PC-3 (cell line): ENCODE measurements at regions of chr18 and their contacts with region 1.

Region 1: DNA sequence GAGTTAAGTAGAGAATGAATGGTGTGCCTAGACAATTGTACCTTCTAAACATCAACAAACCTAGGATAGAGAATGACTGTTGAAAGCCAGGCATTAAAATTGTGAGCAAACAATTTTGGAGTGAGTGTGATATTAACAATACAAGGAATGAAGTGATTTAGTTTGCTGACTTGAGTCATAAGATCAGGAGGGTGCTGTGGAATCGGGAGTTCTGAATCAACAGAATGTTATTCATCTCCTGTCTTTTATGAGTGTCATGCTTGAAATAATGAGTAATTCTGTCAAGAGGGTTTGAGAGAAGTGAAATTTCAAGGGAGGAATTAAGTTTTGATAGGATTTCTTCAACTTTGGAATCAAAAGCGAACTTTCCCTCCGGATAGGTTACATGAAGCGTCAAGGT is 214.4 kb upstream of the DSEL start:
- DNase-seq: peak; percentile 94
- ATAC-seq: peak; percentile 90
- H3K4me3 ChIP-seq: peak overlapping the region; percentile 27; the same call in 1 of the 2 replicates
- H3K27ac ChIP-seq: peak overlapping the region; percentile 94
- H3K4me1 ChIP-seq: peaks cover 47% of the 10 kb centered on the region
- H3K27me3 ChIP-seq: no peaks in the 10 kb centered on the region
- CTCF ChIP-seq: no peak

Region 2: GRCh38 chr18:67072791-67073190 is 658.1 kb before region 1 on chr18:
- CTCF ChIA-PET with region 1: no interaction called
- POLR2A ChIA-PET with region 1: no interaction called
- intact Hi-C with region 1: no loop called
- DNase-seq: peak; percentile 9
- ATAC-seq: no peak
- H3K4me3 ChIP-seq: no peak overlapping the region
- H3K27ac ChIP-seq: no peak overlapping the region
- H3K4me1 ChIP-seq: no peaks in the 10 kb centered on the region
- H3K27me3 ChIP-seq: no peaks in the 10 kb centered on the region
- CTCF ChIP-seq: no peak

Region 3: DNA sequence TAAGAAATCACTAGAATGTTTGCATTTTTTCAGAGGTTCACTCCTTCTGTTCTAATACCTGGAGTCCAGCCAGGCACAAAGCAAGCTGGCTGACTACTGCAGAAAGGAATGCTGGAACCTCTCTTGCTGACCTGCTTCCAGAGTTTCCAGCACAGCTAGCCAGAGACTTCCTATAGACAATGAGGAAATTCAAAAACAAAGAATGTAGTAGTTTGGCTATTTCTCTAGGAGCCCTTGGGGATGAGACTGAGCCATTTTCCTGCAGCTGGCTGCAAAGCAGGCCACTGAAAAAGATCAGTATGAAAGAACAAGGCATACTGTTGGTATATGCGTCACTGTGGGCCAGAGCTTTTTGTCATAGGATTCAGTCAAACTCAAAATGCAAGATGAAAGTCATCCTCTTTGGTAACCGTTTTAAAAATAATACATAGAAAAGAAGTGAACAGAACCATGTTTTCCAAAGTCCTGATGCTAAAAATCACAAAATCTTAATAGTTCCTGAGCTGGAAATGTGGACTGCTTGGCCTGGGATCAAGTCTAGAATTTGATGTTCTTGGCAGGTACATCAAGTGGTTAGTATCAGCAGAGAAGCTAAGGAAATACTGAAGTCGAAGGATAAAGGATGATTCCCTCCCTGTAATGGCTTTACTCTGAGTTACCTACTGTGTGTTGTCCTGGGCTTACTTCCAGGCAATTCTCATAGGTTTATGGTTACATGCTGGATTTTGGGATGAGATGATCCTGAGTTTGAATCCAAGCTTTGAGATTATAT is 205.4 kb before region 1 on chr18:
- CTCF ChIA-PET with region 1: no interaction called
- POLR2A ChIA-PET with region 1: no interaction called
- intact Hi-C with region 1: loop called (anchors 2 kb)
- DNase-seq: peak; percentile 93
- ATAC-seq: peak; percentile 99
- H3K4me3 ChIP-seq: no peak overlapping the region
- H3K27ac ChIP-seq: peak overlapping the region; percentile 34; the same call in 1 of the 2 replicates
- H3K4me1 ChIP-seq: peaks cover 16% of the 10 kb centered on the region
- H3K27me3 ChIP-seq: no peaks in the 10 kb centered on the region
- CTCF ChIP-seq: no peak

Region 4: GRCh38 chr18:67670024-67670543 is 60.8 kb before region 1 on chr18:
- CTCF ChIA-PET with region 1: no interaction called
- POLR2A ChIA-PET with region 1: no interaction called
- intact Hi-C with region 1: no loop called
- DNase-seq: peak; percentile 32
- ATAC-seq: no peak
- H3K4me3 ChIP-seq: no peak overlapping the region
- H3K27ac ChIP-seq: no peak overlapping the region
- H3K4me1 ChIP-seq: peaks cover 10% of the 10 kb centered on the region
- H3K27me3 ChIP-seq: no peaks in the 10 kb centered on the region
- CTCF ChIP-seq: no peak

Region 5: GRCh38 chr18:67766930-67767329 is 36.0 kb after region 1 on chr18:
- CTCF ChIA-PET with region 1: interaction called, 3 read pairs
- POLR2A ChIA-PET with region 1: no interaction called
- intact Hi-C with region 1: loop called (anchors 5 kb)
- DNase-seq: peak; percentile 95
- ATAC-seq: peak; percentile 87
- H3K4me3 ChIP-seq: no peak overlapping the region
- H3K27ac ChIP-seq: peak overlapping the region; percentile 90
- H3K4me1 ChIP-seq: peaks cover 25% of the 10 kb centered on the region
- H3K27me3 ChIP-seq: no peaks in the 10 kb centered on the region
- CTCF ChIP-seq: no peak

Region 6: GRCh38 chr18:67783196-67783946 is 52.5 kb after region 1 on chr18:
- CTCF ChIA-PET with region 1: no interaction called
- POLR2A ChIA-PET with region 1: no interaction called
- intact Hi-C with region 1: loop called (anchors 5 kb)
- DNase-seq: peak; percentile 96
- ATAC-seq: peak; percentile 95
- H3K4me3 ChIP-seq: no peak overlapping the region
- H3K27ac ChIP-seq: peak overlapping the region; percentile 88
- H3K4me1 ChIP-seq: peaks cover 20% of the 10 kb centered on the region
- H3K27me3 ChIP-seq: no peaks in the 10 kb centered on the region
- CTCF ChIP-seq: no peak